ENCODE measurements at regions of chr11 and their contacts with region 1.

Region 1: GRCh38 chr11:62337303-62338181 is at the start of gene ASRGL1:
- DNase-seq: peak; percentile 51 to 85 (median 78)
- ATAC-seq: peak; percentile 86
- H3K4me3 ChIP-seq: peak within 1 kb of the TSS; percentile 58 to 65
- H3K4me3 Mint-ChIP-seq: peak within 1 kb of the TSS; percentile 89
- H3K27ac ChIP-seq: no peak within 1 kb of the TSS
- H3K27ac Mint-ChIP-seq: peak within 1 kb of the TSS; percentile 57
- H3K4me1 ChIP-seq: peaks cover 5% of the 10 kb centered on the region
- H3K4me1 Mint-ChIP-seq: peaks cover 17% of the 10 kb centered on the region
- H3K27me3 ChIP-seq: peaks cover 0 to 2% of the 10 kb centered on the region in 2 experiments
- H3K27me3 Mint-ChIP-seq: peaks cover 3% of the 10 kb centered on the region
- CTCF ChIP-seq: no peak
- total RNA-seq, gene ASRGL1: 1.0 to 1.2 TPM

Region 2: GRCh38 chr11:62264004-62264403 is 73.5 kb before region 1 on chr11:
- CTCF ChIA-PET with region 1: no interaction called
- POLR2A ChIA-PET with region 1: no interaction called
- intact Hi-C with region 1: no loop called
- DNase-seq: no peak
- ATAC-seq: no peak
- H3K4me3 ChIP-seq: no peak overlapping the region
- H3K4me3 Mint-ChIP-seq: no peak overlapping the region
- H3K27ac ChIP-seq: no peak overlapping the region
- H3K27ac Mint-ChIP-seq: no peak overlapping the region
- H3K4me1 ChIP-seq: no peaks in the 10 kb centered on the region
- H3K4me1 Mint-ChIP-seq: no peaks in the 10 kb centered on the region
- H3K27me3 ChIP-seq: no peaks in the 10 kb centered on the region
- H3K27me3 Mint-ChIP-seq: peaks cover 20% of the 10 kb centered on the region
- CTCF ChIP-seq: no peak

Region 3: DNA sequence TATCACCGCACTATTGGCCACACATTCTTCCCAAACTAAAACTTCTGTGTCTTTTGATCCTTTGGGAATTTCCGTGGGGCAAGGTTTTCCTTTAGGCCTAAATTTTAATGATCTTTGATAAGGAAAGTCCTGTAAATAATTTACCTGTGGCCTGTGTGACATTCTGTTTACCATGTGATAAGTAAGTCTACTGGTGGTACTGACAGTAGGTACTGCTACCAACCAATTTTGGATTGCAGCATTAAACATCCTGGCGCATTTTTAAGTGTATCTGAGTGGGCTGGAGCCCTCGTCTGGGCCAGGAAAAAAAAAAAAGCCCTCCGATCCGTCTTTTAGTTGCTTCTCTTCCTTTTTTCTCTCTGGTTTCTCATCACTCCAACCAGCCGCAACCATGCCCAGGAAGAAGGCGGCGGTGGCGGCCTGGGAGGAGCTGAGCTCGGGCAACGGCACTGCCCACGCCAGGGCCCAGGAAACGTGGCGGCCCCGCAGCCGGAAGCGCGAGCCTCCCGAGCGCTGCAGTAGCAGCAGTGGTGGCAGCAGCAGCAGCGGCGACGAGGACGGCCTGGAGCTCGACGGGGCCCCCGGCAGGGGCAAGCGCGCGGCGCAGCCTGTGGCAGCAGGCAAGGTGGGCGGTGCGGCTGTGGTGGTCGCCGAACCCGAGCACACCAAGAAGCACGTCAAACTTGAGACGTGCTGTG is 33.4 kb after region 1 on chr11:
- CTCF ChIA-PET with region 1: interaction called, 25 read pairs
- POLR2A ChIA-PET with region 1: interaction called, 3 read pairs
- intact Hi-C with region 1: no loop called
- DNase-seq: peak; percentile 12 to 76 (median 38)
- ATAC-seq: peak; percentile 87
- H3K4me3 ChIP-seq: no peak overlapping the region
- H3K4me3 Mint-ChIP-seq: peak overlapping the region; percentile 68
- H3K27ac ChIP-seq: peak overlapping the region in 1 of 2 experiments; percentile 69
- H3K27ac Mint-ChIP-seq: peak overlapping the region; percentile 86
- H3K4me1 ChIP-seq: no peaks in the 10 kb centered on the region
- H3K4me1 Mint-ChIP-seq: peaks cover 16% of the 10 kb centered on the region
- H3K27me3 ChIP-seq: no peaks in the 10 kb centered on the region
- H3K27me3 Mint-ChIP-seq: no peaks in the 10 kb centered on the region
- CTCF ChIP-seq: no peak

Region 4: DNA sequence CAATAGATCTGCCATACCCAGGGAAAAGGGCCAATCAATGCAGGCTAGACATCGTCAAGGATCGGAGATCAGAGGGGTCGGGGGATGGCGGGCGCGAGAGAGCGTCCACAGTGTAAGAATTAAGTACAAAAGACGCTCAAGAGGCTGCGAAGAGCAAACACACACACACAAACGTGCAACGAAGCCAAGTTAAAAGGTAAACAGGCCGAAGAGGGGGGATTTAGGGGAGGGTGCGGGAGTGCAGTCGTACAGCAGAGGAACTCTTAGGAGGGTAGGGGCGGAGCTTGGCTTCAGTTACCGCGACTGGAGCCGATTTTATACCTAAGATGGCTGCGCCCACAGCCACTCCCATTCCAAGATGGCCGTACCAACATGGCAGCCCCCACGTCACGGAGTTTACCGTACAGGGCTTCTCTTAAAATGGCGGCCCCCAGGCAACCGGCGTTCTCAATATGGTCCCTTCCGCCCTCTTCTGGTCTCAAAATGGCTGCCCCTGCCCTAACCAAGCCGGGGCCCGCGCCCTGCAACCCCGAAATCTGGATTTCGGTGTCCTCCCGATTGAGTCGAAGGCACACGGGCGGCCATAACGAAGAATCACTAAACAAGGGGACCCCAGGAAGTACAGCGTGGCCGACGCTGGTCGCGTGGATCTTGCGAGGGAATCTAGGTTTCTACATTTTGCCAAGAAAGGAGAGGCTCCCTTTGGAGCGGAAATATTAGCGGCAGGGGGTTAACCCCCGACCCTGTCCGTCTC is 371.9 kb after region 1 on chr11:
- CTCF ChIA-PET with region 1: no interaction called
- POLR2A ChIA-PET with region 1: no interaction called
- intact Hi-C with region 1: no loop called
- DNase-seq: peak; percentile 94 to 99 (median 97)
- ATAC-seq: peak; percentile 78
- H3K4me3 ChIP-seq: peak overlapping the region; percentile 60 to 89
- H3K4me3 Mint-ChIP-seq: peak overlapping the region; percentile 93
- H3K27ac ChIP-seq: peak overlapping the region; percentile 88
- H3K27ac Mint-ChIP-seq: peak overlapping the region; percentile 98
- H3K4me1 ChIP-seq: peaks cover 44% of the 10 kb centered on the region
- H3K4me1 Mint-ChIP-seq: peaks cover 59% of the 10 kb centered on the region
- H3K27me3 ChIP-seq: no peaks in the 10 kb centered on the region
- H3K27me3 Mint-ChIP-seq: no peaks in the 10 kb centered on the region
- CTCF ChIP-seq: no peak

Measured in CD8-positive, alpha-beta T cell (primary cell).